K562 (cell line): ENCODE measurements at regions of chr6 and their contacts with region 1.

Region 1: GRCh38 chr6:57316581-57317059 is 810 bp upstream of the PRIM2 start:
- DNase-seq: peak; percentile 74 to 94 (median 75)
- ATAC-seq: peak; percentile 90
- H3K4me3 ChIP-seq: peak overlapping the region; percentile 74
- H3K27ac ChIP-seq: peak overlapping the region; percentile 80
- H3K4me1 ChIP-seq: peaks cover 0 to 2% of the 10 kb centered on the region in 2 experiments; a peak in 2 of 5 replicates
- H3K27me3 ChIP-seq: no peaks in the 10 kb centered on the region
- CTCF ChIP-seq: peak; percentile 89 to 98 (median 92)
- EP300 ChIP-seq: no peak
- POLR2A ChIP-seq: no peak
- RAD21 ChIP-seq: peak; percentile 95 to 97

Region 2: DNA sequence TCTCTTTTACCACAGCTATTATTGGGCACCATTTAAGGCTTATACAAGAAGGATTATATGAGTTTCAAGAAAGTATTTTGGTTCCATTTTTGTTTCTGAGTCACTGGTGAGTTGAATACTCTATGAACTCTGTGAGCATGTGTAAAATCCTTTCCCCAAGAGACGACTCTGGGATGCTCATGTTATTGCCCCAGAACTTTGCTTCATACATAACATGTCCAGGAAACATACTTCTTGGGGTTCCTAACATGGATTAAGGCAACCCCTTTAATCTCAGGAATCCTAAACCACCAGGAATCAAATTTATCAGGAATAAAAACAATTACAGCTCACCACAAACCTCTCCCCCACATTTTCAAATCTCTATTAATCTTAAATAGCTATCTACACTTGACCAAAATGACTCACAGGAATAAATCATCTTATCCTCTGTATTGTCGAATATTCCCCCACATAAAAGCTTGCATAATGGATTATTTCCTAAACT is 951.8 kb before region 1 on chr6:
- CTCF ChIA-PET with region 1: no interaction called
- POLR2A ChIA-PET with region 1: no interaction called
- in situ Hi-C with region 1: loop called (anchors 25 kb)
- intact Hi-C with region 1: loop called (anchors 10 kb)
- DNase-seq: no peak
- ATAC-seq: no peak
- H3K4me3 ChIP-seq: no peak overlapping the region
- H3K27ac ChIP-seq: no peak overlapping the region
- H3K4me1 ChIP-seq: no peaks in the 10 kb centered on the region
- H3K27me3 ChIP-seq: no peaks in the 10 kb centered on the region; a peak in 2 of 5 replicates
- CTCF ChIP-seq: no peak
- EP300 ChIP-seq: no peak
- POLR2A ChIP-seq: no peak
- RAD21 ChIP-seq: no peak

Region 3: DNA sequence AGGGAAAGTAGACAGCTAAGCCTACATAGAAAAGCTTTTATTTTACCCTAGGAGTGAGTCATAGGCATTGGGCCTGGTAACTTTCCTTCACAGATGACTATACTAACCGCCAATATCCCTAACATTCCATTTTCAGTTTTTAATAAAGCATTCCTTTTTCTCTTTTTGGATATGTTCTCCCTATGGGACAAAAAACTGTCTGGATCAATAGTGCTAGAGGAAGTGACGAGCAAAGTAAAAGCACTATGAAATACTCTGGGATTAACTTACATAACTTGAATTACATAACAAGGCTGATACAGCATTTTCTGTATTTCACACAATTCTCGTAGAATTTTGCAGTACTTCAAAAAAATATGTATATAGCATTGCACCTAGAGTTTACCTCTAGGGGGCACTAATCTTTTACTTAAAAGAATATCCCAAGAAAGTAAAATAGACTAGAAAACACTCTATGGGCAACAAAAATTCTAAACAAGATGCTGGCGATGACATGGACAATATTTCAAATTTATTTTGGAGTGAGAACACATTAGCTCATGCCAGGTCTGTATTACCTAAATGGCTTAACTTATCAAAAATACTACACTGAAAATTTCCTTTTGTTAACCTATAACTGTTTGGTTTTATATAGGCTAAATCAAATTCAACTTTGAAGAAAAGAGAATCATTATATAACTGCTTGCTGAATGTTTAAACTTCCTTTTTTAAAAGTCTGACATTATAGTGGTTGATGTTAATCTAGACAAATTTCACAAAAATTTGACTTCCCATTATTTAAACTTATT is 607.6 kb before region 1 on chr6:
- CTCF ChIA-PET with region 1: no interaction called
- POLR2A ChIA-PET with region 1: no interaction called
- in situ Hi-C with region 1: no loop called
- intact Hi-C with region 1: loop called (anchors 10 kb)
- DNase-seq: peak; percentile 8 to 45 (median 24)
- ATAC-seq: peak; percentile 78
- H3K4me3 ChIP-seq: no peak overlapping the region
- H3K27ac ChIP-seq: no peak overlapping the region
- H3K4me1 ChIP-seq: no peaks in the 10 kb centered on the region
- H3K27me3 ChIP-seq: no peaks in the 10 kb centered on the region
- CTCF ChIP-seq: peak in 2 of 3 experiments; percentile 43 to 64; a peak in 4 of 6 replicates
- EP300 ChIP-seq: no peak
- POLR2A ChIP-seq: no peak
- RAD21 ChIP-seq: peak; percentile 46 to 62

Region 4: DNA sequence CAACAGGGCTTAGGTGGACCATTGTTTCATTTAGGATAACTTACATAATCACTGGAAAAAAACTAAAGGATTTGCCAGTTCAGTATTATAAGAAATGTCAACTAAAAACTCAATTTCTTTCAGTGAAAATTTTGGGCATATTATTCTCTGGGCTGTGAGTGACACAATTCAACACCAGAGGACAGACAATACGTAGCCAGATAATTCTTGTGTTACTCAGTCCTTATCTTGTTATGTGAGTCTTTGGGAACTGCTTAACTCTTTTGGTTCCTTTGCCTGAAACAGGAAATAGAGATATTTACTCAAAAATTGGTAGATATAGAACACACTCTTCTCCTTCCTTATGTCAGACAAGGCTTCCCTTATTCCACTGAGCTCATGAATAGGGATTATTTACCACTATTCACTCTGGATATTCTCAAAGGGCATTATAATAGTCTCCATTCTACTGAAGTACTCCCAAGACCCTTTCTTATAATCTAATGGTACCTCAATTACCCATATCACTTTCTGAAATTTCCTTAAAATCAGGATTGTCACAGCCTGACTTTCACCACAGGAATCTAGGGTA is 366.6 kb before region 1 on chr6:
- CTCF ChIA-PET with region 1: no interaction called
- POLR2A ChIA-PET with region 1: interaction called, 3 read pairs
- in situ Hi-C with region 1: no loop called
- intact Hi-C with region 1: loop called (anchors 1 kb)
- DNase-seq: peak in 1 of 4 experiments; percentile 39
- ATAC-seq: no peak
- H3K4me3 ChIP-seq: no peak overlapping the region
- H3K27ac ChIP-seq: peak overlapping the region; percentile 35; the same call in 1 of the 3 replicates
- H3K4me1 ChIP-seq: peaks cover 4 to 20% of the 10 kb centered on the region in 2 experiments; a peak in 4 of 5 replicates
- H3K27me3 ChIP-seq: no peaks in the 10 kb centered on the region
- CTCF ChIP-seq: peak in 1 of 3 experiments; percentile 30; a peak in 2 of 6 replicates
- EP300 ChIP-seq: no peak
- POLR2A ChIP-seq: no peak
- RAD21 ChIP-seq: peak in 1 of 2 experiments; percentile 37; a peak in 2 of 4 replicates

Region 5: GRCh38 chr6:57013521-57013926 is 303.1 kb before region 1 on chr6:
- CTCF ChIA-PET with region 1: no interaction called
- POLR2A ChIA-PET with region 1: no interaction called
- in situ Hi-C with region 1: no loop called
- intact Hi-C with region 1: loop called (anchors 1 kb)
- DNase-seq: peak in 3 of 4 experiments; percentile 19 to 54 (median 38)
- ATAC-seq: peak; percentile 83
- H3K4me3 ChIP-seq: no peak overlapping the region
- H3K27ac ChIP-seq: no peak overlapping the region
- H3K4me1 ChIP-seq: peaks cover 0 to 11% of the 10 kb centered on the region in 2 experiments; a peak in 3 of 5 replicates
- H3K27me3 ChIP-seq: no peaks in the 10 kb centered on the region
- CTCF ChIP-seq: no peak
- EP300 ChIP-seq: no peak
- POLR2A ChIP-seq: no peak
- RAD21 ChIP-seq: peak in 1 of 2 experiments; percentile 8; a peak in 1 of 4 replicates

Region 6: GRCh38 chr6:57190140-57190539 is 126.5 kb before region 1 on chr6:
- CTCF ChIA-PET with region 1: interaction called, 50 read pairs
- POLR2A ChIA-PET with region 1: interaction called, 4 read pairs
- in situ Hi-C with region 1: loop called (anchors 10 kb)
- intact Hi-C with region 1: loop called (anchors 1 kb)
- DNase-seq: no peak
- ATAC-seq: peak; percentile 67
- H3K4me3 ChIP-seq: no peak overlapping the region
- H3K27ac ChIP-seq: no peak overlapping the region
- H3K4me1 ChIP-seq: no peaks in the 10 kb centered on the region
- H3K27me3 ChIP-seq: no peaks in the 10 kb centered on the region
- CTCF ChIP-seq: peak in 2 of 3 experiments; percentile 20 to 60; a peak in 3 of 6 replicates
- EP300 ChIP-seq: no peak
- POLR2A ChIP-seq: no peak
- RAD21 ChIP-seq: peak; percentile 65 to 71